ENCODE measurements at regions of chr2 and their contacts with region 1.

Region 1: DNA sequence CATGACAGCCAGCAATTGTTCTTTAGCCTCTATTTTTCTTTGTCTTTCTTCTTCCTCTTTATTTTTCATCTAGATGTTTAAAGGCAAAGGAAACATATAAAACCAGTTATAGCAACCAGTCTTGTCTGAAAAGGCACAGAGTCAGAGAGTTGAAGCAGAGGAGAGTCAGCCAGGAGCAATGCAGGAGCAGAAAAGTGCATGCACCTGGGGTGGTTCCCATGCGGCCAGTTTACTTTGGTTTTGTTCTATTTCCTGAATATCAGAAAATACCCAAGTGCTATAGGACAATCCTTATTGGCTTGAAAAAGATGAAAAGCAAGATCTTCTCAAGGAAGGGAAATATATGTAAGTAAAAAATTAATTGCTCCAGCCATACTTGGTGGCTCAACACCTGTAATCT is 44.9 kb downstream of the CFAP210 start:
- DNase-seq: no peak
- H3K4me3 ChIP-seq: no peak overlapping the region
- H3K27ac ChIP-seq: no peak overlapping the region
- H3K4me1 ChIP-seq: no peaks in the 10 kb centered on the region
- H3K27me3 ChIP-seq: no peaks in the 10 kb centered on the region
- CTCF ChIP-seq: no peak
- EP300 ChIP-seq: no peak
- POLR2A ChIP-seq: no peak

Region 2: GRCh38 chr2:169221745-169222369 is 427.4 kb before region 1 on chr2:
- intact Hi-C with region 1: loop called in 1 of 4 experiments (anchors 5 kb)
- DNase-seq: no peak
- H3K4me3 ChIP-seq: no peak overlapping the region
- H3K27ac ChIP-seq: no peak overlapping the region
- H3K4me1 ChIP-seq: no peaks in the 10 kb centered on the region
- H3K27me3 ChIP-seq: no peaks in the 10 kb centered on the region
- CTCF ChIP-seq: no peak
- EP300 ChIP-seq: no peak
- POLR2A ChIP-seq: no peak

Region 3: DNA sequence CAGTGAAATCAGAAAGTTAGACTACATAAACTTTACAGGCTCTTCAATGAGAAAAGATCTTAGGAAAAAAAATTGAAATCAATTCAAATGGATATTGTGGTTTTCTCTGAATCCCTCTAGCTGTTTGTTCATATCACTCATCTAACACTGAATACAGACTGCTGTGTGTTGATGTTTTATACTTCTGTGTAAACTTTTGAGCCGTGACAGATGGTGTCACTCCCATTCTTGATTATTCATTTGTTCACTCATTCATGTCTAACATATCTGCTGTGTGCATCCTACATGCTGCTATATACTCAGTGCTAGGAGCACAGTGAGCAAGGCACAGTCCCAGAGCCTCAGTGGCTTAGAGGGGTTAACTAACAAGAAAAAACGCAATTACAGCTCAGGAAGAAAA is 97.0 kb after region 1 on chr2:
- intact Hi-C with region 1: no loop called
- DNase-seq: no peak
- H3K4me3 ChIP-seq: no peak overlapping the region
- H3K27ac ChIP-seq: no peak overlapping the region
- H3K4me1 ChIP-seq: no peaks in the 10 kb centered on the region
- H3K27me3 ChIP-seq: no peaks in the 10 kb centered on the region
- CTCF ChIP-seq: no peak
- EP300 ChIP-seq: no peak
- POLR2A ChIP-seq: no peak

Measured in ovary (tissue), 10 donors.